Activated T-helper 1 cell treated with anti-CD3 and anti-CD28 coated beads, Interleukin-12 subunit alpha, Interleukin-12 subunit beta, Interleukin-2, Interleukin-4 antibody, amounts not matched to agents 30 ng/mL and 10 ng/mL and 1 ng/mL, durations not matched to agents 14 hours and 24 hours and 36 hours (primary cell): ENCODE measurements at regions of chr1 and their contacts with region 1.

Region 1: DNA sequence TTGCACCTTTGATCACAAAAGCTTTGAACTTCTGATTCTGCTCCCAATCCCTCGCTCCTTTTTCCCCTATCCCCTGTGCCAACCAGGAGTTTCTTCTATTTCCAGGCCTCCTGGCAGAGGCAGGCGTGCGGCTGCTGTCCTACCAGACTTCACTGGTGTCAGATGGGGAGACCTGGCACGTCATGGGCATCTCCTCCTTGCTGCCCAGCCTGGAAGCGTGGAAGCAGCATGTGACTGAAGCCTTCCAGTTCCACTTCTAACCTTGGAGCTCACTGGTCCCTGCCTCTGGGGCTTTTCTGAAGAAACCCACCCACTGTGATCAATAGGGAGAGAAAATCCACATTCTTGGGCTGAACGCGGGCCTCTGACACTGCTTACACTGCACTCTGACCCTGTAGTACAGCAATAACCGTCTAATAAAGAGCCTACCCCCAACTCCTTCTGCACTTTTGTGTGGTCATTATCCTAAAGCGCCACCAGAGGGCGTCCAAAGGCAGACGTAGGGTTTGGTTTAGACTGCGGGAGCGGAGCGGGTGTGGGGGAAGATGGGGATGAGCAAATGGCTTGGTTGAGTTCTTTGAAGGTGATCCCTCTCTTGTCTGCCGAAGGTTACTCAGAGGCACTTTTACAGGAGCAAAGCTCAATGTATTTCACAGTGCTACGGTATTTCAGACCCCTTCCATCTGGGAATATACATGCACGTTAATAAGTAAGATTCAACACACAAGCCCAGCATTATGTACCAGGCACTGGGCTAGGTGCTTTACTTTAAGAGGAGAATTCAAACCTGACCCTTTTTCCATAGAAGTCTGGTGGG is 24.7 kb downstream of the HMGCS2 start:
- DNase-seq: peak; percentile 21
- H3K4me3 Mint-ChIP-seq: no peak overlapping the region
- H3K27ac Mint-ChIP-seq: no peak overlapping the region
- H3K4me1 Mint-ChIP-seq: peaks cover 25% of the 10 kb centered on the region
- H3K27me3 Mint-ChIP-seq: no peaks in the 10 kb centered on the region

Region 2: GRCh38 chr1:119613769-119614720 is 129.9 kb before region 1 on chr1:
- intact Hi-C with region 1: loop called (anchors 1 kb)
- DNase-seq: peak; percentile 52
- H3K4me3 Mint-ChIP-seq: no peak overlapping the region
- H3K27ac Mint-ChIP-seq: no peak overlapping the region
- H3K4me1 Mint-ChIP-seq: no peaks in the 10 kb centered on the region
- H3K27me3 Mint-ChIP-seq: peaks cover 5% of the 10 kb centered on the region

Region 3: DNA sequence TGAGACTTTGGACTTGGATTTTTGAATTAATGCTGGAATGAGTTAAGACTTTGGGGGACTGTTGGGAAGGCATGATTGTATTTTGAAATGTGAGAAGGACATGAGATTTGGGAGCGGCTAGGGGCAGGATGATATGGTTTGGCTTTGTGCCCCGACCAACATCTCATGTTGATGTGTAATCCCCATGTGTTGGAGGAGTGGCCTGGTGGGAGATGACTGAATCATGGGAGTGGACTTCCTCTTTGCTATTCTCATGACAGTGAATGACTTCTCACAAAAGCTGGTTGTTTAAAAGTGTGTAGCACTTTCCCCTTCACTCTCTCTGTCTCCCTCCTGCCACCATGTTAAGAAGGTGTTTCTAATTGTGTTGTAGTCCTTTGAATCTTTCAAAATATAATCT is 41.6 kb before region 1 on chr1:
- intact Hi-C with region 1: no loop called
- DNase-seq: no peak
- H3K4me3 Mint-ChIP-seq: no peak overlapping the region
- H3K27ac Mint-ChIP-seq: no peak overlapping the region
- H3K4me1 Mint-ChIP-seq: no peaks in the 10 kb centered on the region
- H3K27me3 Mint-ChIP-seq: peaks cover 6% of the 10 kb centered on the region

Region 4: GRCh38 chr1:119779869-119780356 is 35.9 kb after region 1 on chr1:
- intact Hi-C with region 1: loop called (anchors 5 kb)
- DNase-seq: no peak
- H3K4me3 Mint-ChIP-seq: no peak overlapping the region
- H3K27ac Mint-ChIP-seq: no peak overlapping the region
- H3K4me1 Mint-ChIP-seq: peaks cover 32% of the 10 kb centered on the region
- H3K27me3 Mint-ChIP-seq: peaks cover 34% of the 10 kb centered on the region

Region 5: GRCh38 chr1:119808972-119809550 is 65.1 kb after region 1 on chr1:
- intact Hi-C with region 1: loop called (anchors 2 kb)
- DNase-seq: peak; percentile 53
- H3K4me3 Mint-ChIP-seq: no peak overlapping the region
- H3K27ac Mint-ChIP-seq: no peak overlapping the region
- H3K4me1 Mint-ChIP-seq: peaks cover 12% of the 10 kb centered on the region
- H3K27me3 Mint-ChIP-seq: peaks cover 35% of the 10 kb centered on the region

Region 6: GRCh38 chr1:119885903-119886783 is 142.2 kb after region 1 on chr1:
- intact Hi-C with region 1: loop called (anchors 10 kb)
- DNase-seq: peak; percentile 33
- H3K4me3 Mint-ChIP-seq: no peak overlapping the region
- H3K27ac Mint-ChIP-seq: no peak overlapping the region
- H3K4me1 Mint-ChIP-seq: no peaks in the 10 kb centered on the region
- H3K27me3 Mint-ChIP-seq: peaks cover 20% of the 10 kb centered on the region